ENCODE measurements at regions of chr12 and their contacts with region 1.

Region 1: DNA sequence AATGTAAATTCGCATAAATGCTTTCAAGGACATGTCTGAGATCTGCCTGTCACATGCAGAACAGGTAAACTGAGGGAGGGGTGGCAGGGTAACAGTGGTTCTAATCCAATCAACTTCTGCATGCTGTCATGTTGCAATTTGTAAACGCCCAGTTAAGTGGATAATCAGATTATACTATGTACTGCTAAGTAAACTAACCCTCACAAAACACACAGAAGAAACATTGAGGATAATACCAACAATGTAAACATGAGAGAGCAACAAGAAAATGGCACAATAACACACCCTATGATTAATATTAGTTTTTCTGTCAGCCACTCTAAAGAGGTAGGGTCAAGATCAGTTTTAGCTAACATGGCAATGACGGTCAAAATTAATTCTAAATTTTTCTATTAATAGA is 123.7 kb downstream of the KIF21A start:
- DNase-seq: no peak
- ATAC-seq: no peak
- H3K4me3 ChIP-seq: no peak overlapping the region
- H3K27ac ChIP-seq: no peak overlapping the region
- H3K4me1 ChIP-seq: no peaks in the 10 kb centered on the region
- H3K27me3 ChIP-seq: no peaks in the 10 kb centered on the region
- CTCF ChIP-seq: no peak
- POLR2A ChIP-seq: no peak
- RAD21 ChIP-seq: no peak

Region 2: GRCh38 chr12:39443081-39443928 is 124.1 kb after region 1 on chr12 and contains the start of gene KIF21A:
- CTCF ChIA-PET with region 1: no interaction called
- POLR2A ChIA-PET with region 1: no interaction called
- dilution Hi-C with region 1: no loop called
- in situ Hi-C with region 1: no loop called
- intact Hi-C with region 1: loop called (anchors 10 kb)
- DNase-seq: peak; percentile 61
- ATAC-seq: peak; percentile 98
- H3K4me3 ChIP-seq: peak within 1 kb of the TSS; percentile 37
- H3K27ac ChIP-seq: no peak within 1 kb of the TSS; the same call in 1 of the 2 replicates
- H3K4me1 ChIP-seq: no peaks in the 10 kb centered on the region
- H3K27me3 ChIP-seq: peaks cover 5% of the 10 kb centered on the region
- CTCF ChIP-seq: peak; percentile 45
- POLR2A ChIP-seq: 0 out of 2 replicates have a peak, but pooled peaks have one; percentile 30
- RAD21 ChIP-seq: no peak
- total RNA-seq, gene KIF21A: 1.1 TPM in 2 replicates

Region 3: GRCh38 chr12:39692258-39692853 is 373.2 kb after region 1 on chr12:
- CTCF ChIA-PET with region 1: no interaction called
- POLR2A ChIA-PET with region 1: no interaction called
- dilution Hi-C with region 1: no loop called
- in situ Hi-C with region 1: no loop called
- intact Hi-C with region 1: loop called (anchors 5 kb)
- DNase-seq: no peak
- ATAC-seq: no peak
- H3K4me3 ChIP-seq: no peak overlapping the region
- H3K27ac ChIP-seq: no peak overlapping the region
- H3K4me1 ChIP-seq: no peaks in the 10 kb centered on the region
- H3K27me3 ChIP-seq: no peaks in the 10 kb centered on the region
- CTCF ChIP-seq: 0 out of 2 replicates have a peak, but pooled peaks have one; percentile 17
- POLR2A ChIP-seq: no peak
- RAD21 ChIP-seq: no peak

Region 4: DNA sequence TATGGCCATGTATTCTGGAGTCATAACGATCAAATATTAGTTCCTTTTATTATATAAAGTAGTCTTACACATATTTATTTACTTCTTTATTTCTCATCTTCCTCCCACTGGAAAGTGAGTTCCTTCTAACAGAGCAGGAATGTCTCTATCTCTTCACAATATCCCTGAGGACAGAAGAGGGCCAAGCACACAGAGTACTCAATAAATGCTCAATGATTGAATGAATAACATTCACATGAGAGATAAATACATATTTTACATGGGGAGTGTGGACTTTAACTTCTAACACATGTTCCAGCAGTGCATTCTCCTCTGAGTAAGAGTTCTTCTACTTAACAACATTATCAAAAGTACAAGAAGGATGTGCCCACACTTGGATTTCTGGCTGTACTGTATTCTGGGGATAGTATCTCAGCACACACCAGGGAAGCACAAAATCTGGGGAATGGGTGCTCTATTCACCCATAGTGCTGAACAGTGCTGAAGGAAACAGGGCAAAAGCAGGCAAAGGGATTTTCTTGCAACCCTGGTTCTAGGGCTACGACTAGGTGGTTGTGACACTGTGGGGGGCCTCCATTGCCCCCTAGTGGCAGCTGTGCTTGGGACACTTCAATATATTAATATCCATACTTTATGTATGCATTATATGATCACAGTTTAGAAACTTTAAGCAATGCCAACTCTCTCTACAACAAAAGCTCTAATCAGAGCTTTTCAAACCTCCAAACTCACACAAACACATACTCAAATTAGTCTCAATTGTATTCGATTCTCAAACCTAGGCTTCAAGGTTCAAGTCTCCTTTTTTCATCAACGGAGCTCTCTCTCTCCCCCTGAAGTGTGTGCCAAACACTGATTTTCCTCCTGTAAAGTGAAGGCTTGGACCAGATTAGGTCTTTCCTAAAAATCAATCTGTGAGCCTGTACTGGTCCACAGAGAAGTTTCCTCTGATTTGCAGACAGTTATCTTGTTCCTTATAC is 671.2 kb after region 1 on chr12:
- CTCF ChIA-PET with region 1: interaction called, 4 read pairs
- POLR2A ChIA-PET with region 1: no interaction called
- dilution Hi-C with region 1: no loop called
- in situ Hi-C with region 1: no loop called
- intact Hi-C with region 1: loop called (anchors 5 kb)
- DNase-seq: peak; percentile 32
- ATAC-seq: peak; percentile 93
- H3K4me3 ChIP-seq: no peak overlapping the region
- H3K27ac ChIP-seq: no peak overlapping the region
- H3K4me1 ChIP-seq: no peaks in the 10 kb centered on the region
- H3K27me3 ChIP-seq: no peaks in the 10 kb centered on the region
- CTCF ChIP-seq: peak; percentile 79
- POLR2A ChIP-seq: no peak
- RAD21 ChIP-seq: peak; percentile 66

Region 5: DNA sequence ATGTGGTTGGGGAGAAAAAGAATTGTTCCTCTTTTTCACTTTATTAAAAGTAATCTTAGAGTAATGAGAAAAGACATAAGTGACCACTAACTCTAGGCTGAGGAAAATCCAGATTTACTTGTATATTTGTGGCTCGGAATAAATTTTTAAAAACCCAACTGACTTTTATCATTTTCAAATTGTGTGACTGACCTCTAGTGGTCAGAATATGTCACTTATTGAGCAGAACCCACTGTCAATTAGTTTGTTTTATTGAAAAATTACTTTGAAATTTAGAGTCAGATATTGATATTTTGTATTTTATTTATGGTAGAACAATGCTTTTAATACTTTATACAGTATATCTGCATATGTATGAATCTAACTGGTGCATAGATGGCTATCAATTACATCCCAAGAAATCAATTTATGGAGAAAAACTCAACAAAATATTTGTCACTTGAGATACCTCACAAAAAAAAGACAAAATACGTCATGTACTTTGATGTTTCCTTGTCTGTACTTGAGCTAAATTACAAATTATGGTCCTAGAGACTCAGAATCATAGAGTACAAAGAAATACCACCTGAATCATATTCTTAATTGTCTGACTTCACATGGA is 1602.5 kb after region 1 on chr12:
- CTCF ChIA-PET with region 1: no interaction called
- POLR2A ChIA-PET with region 1: interaction called, 5 read pairs
- dilution Hi-C with region 1: no loop called
- in situ Hi-C with region 1: no loop called
- intact Hi-C with region 1: loop called (anchors 2 kb)
- DNase-seq: peak; percentile 19
- ATAC-seq: 0 out of 2 replicates have a peak, but pooled peaks have one; percentile 35
- H3K4me3 ChIP-seq: no peak overlapping the region
- H3K27ac ChIP-seq: no peak overlapping the region
- H3K4me1 ChIP-seq: no peaks in the 10 kb centered on the region
- H3K27me3 ChIP-seq: no peaks in the 10 kb centered on the region
- CTCF ChIP-seq: peak; percentile 63
- POLR2A ChIP-seq: no peak
- RAD21 ChIP-seq: peak; percentile 45